T-cell (primary cell): ENCODE measurements at regions of chr17 and their contacts with region 1.

Region 1: GRCh38 chr17:38345743-38346142 is 2.0 kb upstream of the GPR179 start:
- DNase-seq: no peak
- ATAC-seq: no peak
- H3K4me3 ChIP-seq: no peak overlapping the region
- H3K4me3 Mint-ChIP-seq: no peak overlapping the region
- H3K27ac ChIP-seq: no peak overlapping the region
- H3K27ac Mint-ChIP-seq: no peak overlapping the region
- H3K4me1 ChIP-seq: no peaks in the 10 kb centered on the region
- H3K4me1 Mint-ChIP-seq: peaks cover 6 to 7% (median 6%) of the 10 kb centered on the region in 3 donors
- H3K27me3 ChIP-seq: peaks cover 0 to 29% of the 10 kb centered on the region in 2 experiments
- H3K27me3 Mint-ChIP-seq: peaks cover 8 to 12% of the 10 kb centered on the region in 2 donors

Region 2: GRCh38 chr17:37446027-37446426 is 899.7 kb before region 1 on chr17:
- CTCF ChIA-PET with region 1: no interaction called
- POLR2A ChIA-PET with region 1: interaction called in 1 of 2 experiments, 14 read pairs
- DNase-seq: no peak
- ATAC-seq: no peak
- H3K4me3 ChIP-seq: no peak overlapping the region
- H3K4me3 Mint-ChIP-seq: no peak overlapping the region
- H3K27ac ChIP-seq: no peak overlapping the region
- H3K27ac Mint-ChIP-seq: no peak overlapping the region
- H3K4me1 ChIP-seq: no peaks in the 10 kb centered on the region
- H3K4me1 Mint-ChIP-seq: no peaks in the 10 kb centered on the region
- H3K27me3 ChIP-seq: no peaks in the 10 kb centered on the region
- H3K27me3 Mint-ChIP-seq: no peaks in the 10 kb centered on the region